ENCODE measurements at regions of chr6 and their contacts with region 1.

Region 1: GRCh38 chr6:32971581-32972352 is 3.4 kb downstream of the BRD2 start:
- H3K4me3 ChIP-seq: peak overlapping the region; percentile 97
- H3K27ac ChIP-seq: peak overlapping the region; percentile 99
- H3K4me1 ChIP-seq: peaks cover 20% of the 10 kb centered on the region
- CTCF ChIP-seq: no peak; the same call in 1 of the 2 replicates

Region 2: DNA sequence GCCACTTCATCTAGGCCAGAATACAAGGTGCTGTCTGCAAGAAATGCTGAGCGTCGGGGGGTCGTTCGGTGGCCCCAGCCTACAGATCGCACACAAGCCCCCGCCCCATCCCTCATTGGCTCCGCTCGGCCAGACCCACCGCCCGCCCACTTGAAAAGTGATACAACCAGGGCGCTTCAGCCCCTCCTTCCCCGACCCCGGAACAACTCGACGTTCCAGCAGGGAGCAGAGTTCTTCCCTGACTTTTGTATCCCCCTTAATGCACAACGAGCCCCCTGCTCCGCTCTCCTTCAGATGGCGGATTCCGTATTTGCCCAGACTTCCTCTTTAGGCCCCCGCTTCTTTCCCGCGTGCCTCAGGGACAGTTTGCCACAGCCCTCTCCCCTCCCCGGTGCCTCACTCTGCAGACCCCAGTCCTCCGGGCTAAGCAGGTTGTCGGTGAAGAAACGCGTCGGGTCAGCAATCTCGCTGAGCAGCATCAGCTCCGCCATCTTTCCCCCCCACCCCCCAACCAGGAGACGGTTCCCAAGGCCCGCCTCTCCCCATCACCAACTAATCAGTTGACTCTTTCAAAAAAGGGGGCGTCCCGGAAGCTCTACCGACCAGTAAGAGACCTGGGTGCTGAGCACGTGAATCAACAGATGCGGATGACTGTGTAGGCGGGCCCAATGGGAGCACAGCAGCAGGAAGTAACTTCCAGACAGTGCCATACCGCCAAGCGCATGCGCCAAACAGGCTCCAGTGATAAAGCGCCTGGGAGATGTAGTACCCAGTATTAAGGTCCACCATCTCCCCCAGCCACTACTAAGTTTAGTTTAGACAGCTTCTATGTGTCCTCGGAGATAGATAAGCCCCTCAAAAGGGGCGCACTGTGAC is 843.8 kb before region 1 on chr6 and contains the start of gene ATF6B:
- CTCF ChIA-PET with region 1: interaction called, 3 read pairs
- POLR2A ChIA-PET with region 1: interaction called, 17 read pairs
- H3K4me3 ChIP-seq: peak within 1 kb of the TSS; percentile 80
- H3K27ac ChIP-seq: peak within 1 kb of the TSS; percentile 84
- H3K4me1 ChIP-seq: peaks cover 13% of the 10 kb centered on the region
- CTCF ChIP-seq: no peak; the same call in 1 of the 2 replicates

Region 3: GRCh38 chr6:32741031-32741960 is 230.5 kb before region 1 on chr6 and contains the start of gene HLA-DQA2:
- CTCF ChIA-PET with region 1: no interaction called
- POLR2A ChIA-PET with region 1: no interaction called
- H3K4me3 ChIP-seq: no peak within 1 kb of the TSS
- H3K27ac ChIP-seq: no peak within 1 kb of the TSS
- H3K4me1 ChIP-seq: no peaks in the 10 kb centered on the region
- CTCF ChIP-seq: no peak

Region 4: GRCh38 chr6:32853541-32854375 is 118.0 kb before region 1 on chr6 and contains the starts of genes PSMB9 and TAP1:
- CTCF ChIA-PET with region 1: interaction called, 4 read pairs
- POLR2A ChIA-PET with region 1: interaction called, 25 read pairs
- H3K4me3 ChIP-seq: peak within 1 kb of the TSS; percentile 85
- H3K27ac ChIP-seq: peak within 1 kb of the TSS; percentile 71
- H3K4me1 ChIP-seq: no peaks in the 10 kb centered on the region; the same call in 1 of the 2 replicates
- CTCF ChIP-seq: peak; percentile 98

Region 5: GRCh38 chr6:32906539-32906938 is 65.2 kb before region 1 on chr6:
- CTCF ChIA-PET with region 1: no interaction called
- POLR2A ChIA-PET with region 1: interaction called, 37 read pairs
- H3K4me3 ChIP-seq: no peak overlapping the region
- H3K27ac ChIP-seq: no peak overlapping the region
- H3K4me1 ChIP-seq: peaks cover 11% of the 10 kb centered on the region
- CTCF ChIP-seq: no peak

Region 6: DNA sequence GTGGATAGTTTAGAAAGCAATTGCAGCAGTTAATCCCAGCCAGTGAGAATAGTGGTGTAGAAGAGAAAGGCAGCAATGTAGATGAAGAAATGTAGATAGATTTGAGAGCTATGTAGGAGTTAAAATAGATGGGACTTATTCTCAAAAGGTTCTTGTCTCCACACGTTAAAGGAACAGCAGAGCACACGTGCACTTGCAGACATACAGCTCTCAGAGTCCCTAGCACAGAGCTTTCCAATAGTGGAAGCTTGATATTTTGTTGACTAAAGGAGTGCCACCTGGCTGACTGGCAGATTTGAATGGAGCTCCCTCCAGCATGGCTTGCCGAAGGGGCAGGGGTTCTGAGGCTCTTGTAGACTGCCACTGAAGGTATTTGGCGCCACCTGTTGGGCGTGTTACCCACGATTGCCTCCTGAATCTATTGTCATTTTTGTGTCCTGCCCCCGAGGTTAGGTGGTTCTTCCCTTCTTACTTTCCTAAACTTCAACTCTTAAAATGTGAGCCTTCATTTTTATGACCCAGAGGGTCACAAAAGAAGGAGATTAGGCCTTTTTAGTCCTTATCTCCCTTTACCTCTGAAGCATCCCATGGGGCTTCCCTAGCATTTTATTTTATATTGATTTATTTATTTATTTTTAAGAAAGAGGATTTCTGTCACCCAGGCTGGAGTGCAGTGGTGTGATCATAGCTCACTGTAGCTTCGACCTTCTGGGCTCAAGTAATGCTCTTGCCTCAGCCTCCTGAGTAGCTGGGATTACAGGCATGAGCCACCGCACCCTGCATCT is 13.0 kb after region 1 on chr6:
- CTCF ChIA-PET with region 1: interaction called, 193 read pairs
- POLR2A ChIA-PET with region 1: interaction called, 405 read pairs
- H3K4me3 ChIP-seq: no peak overlapping the region
- H3K27ac ChIP-seq: no peak overlapping the region
- H3K4me1 ChIP-seq: peaks cover 4% of the 10 kb centered on the region; the same call in 1 of the 2 replicates
- CTCF ChIP-seq: peak; percentile 85

Region 7: DNA sequence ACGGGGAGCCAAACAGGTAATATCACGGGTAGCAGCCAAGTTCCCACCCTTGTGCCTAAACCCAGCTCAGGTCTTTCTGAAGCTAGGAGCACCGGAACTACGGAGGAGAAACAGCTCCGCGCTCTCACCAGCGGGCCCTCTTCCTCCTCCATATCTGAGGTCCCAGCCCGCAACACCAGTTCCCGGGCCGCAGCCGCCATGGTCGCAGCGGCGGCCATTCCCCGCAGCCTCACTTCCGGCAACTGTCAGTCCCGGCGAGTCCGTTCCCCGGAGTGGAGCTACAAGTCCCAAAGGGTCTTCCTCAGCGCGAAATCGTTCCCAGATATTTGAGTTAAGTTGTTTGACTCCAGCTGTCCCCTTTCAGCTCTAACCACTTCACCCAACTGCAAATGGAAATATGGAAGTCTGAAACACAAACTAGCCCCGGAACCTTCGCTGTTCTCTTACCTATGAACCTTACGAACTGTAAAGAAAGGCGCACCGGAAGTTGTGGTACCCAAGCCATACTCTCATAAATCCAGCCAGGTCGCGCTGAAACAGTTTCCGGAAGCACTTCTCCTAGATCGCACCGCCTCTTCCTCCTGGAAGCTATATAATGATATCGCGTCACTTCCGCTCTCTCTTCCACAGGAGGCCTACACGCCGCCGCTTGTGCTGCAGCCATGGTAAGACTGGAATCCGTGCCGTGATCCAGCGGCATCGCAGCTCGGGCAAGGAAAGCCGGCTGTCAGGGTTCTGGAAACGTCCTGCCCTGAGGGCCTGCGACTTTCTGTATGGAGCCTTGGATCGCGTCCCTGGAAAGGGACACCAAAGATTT is 299.9 kb after region 1 on chr6 and contains the starts of genes RPS18 and VPS52:
- CTCF ChIA-PET with region 1: no interaction called
- POLR2A ChIA-PET with region 1: interaction called, 26 read pairs
- H3K4me3 ChIP-seq: peak within 1 kb of the TSS; percentile 77
- H3K27ac ChIP-seq: peak within 1 kb of the TSS; percentile 99
- H3K4me1 ChIP-seq: peaks cover 27% of the 10 kb centered on the region
- CTCF ChIP-seq: peak; percentile 49; the same call in 1 of the 2 replicates

Measured in HEK293 (cell line).